CD8-positive, alpha-beta T cell (primary cell): ENCODE measurements at regions of chr9 and their contacts with region 1.

Region 1: DNA sequence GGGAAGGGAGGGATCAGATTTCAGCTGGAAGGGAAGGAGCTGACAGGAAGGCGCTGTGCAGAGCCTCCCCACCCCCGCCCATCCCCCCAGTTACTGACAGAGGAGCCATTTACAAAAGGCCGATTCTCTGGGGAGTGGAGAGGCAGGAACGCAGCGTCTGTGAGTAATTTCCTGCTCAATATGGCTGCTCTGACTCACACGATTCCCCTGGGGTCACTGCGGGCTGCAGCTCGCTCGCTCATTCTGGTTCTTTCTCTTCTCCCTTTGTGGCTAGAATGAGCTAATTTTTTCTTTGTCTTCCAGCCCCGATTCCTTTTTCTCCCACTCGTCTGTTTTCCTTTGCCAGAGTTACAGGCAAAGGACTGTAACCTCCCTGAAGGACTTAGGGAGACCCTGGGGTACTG is 28.8 kb downstream of the PTPA start:
- DNase-seq: peak; percentile 35 to 92 (median 80)
- ATAC-seq: peak; percentile 89
- H3K4me3 ChIP-seq: peak overlapping the region; percentile 55 to 58
- H3K4me3 Mint-ChIP-seq: peak overlapping the region; percentile 90
- H3K27ac ChIP-seq: peak overlapping the region; percentile 86 to 94
- H3K27ac Mint-ChIP-seq: peak overlapping the region; percentile 95
- H3K4me1 ChIP-seq: peaks cover 36% of the 10 kb centered on the region
- H3K4me1 Mint-ChIP-seq: peaks cover 34% of the 10 kb centered on the region
- H3K27me3 ChIP-seq: no peaks in the 10 kb centered on the region
- H3K27me3 Mint-ChIP-seq: no peaks in the 10 kb centered on the region
- CTCF ChIP-seq: no peak

Region 2: GRCh38 chr9:129154866-129155477 is 15.0 kb after region 1 on chr9:
- CTCF ChIA-PET with region 1: interaction called, 39 read pairs
- POLR2A ChIA-PET with region 1: no interaction called
- intact Hi-C with region 1: no loop called
- DNase-seq: no peak
- ATAC-seq: no peak
- H3K4me3 ChIP-seq: no peak overlapping the region
- H3K4me3 Mint-ChIP-seq: no peak overlapping the region
- H3K27ac ChIP-seq: no peak overlapping the region
- H3K27ac Mint-ChIP-seq: no peak overlapping the region
- H3K4me1 ChIP-seq: no peaks in the 10 kb centered on the region
- H3K4me1 Mint-ChIP-seq: no peaks in the 10 kb centered on the region
- H3K27me3 ChIP-seq: no peaks in the 10 kb centered on the region
- H3K27me3 Mint-ChIP-seq: no peaks in the 10 kb centered on the region
- CTCF ChIP-seq: no peak

Region 3: DNA sequence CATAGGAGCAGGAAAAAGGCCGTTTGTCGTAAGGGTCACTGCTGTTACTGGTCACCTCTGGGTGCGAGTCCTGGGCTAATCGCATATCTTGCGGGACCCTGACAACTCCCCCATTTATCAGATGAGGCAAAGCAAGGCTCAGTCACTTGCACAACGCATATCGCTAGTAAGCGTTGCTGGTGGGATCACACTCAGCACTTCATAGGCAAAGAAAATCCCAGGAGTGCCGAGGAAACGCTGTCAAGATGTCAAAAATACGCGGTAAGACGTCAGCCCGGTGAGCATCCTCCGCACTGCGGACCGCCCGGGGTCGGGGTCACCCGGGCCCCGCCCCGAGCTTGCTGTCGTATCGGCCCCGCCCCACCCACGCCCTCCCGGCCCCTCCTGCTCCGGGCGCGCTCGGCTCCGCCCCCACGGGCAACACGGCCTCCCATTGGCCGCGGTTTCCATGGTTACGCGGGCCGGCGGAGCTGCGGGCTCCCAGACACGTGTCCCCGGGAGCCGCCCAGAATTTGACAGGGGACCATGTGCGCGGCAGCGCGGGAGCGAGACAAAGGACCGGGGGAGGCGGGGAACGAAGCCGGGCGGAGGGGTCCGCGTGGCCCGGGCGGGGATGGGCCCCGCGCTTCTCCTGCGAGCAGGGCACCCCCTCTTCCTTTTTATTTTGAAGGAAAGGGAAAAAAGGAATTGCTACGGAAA is 118.3 kb after region 1 on chr9:
- CTCF ChIA-PET with region 1: no interaction called
- POLR2A ChIA-PET with region 1: no interaction called
- intact Hi-C with region 1: loop called in 1 of 2 experiments (anchors 2 kb)
- DNase-seq: peak; percentile 77 to 96 (median 89)
- ATAC-seq: peak; percentile 88
- H3K4me3 ChIP-seq: peak overlapping the region; percentile 38 to 42
- H3K4me3 Mint-ChIP-seq: peak overlapping the region; percentile 75
- H3K27ac ChIP-seq: no peak overlapping the region
- H3K27ac Mint-ChIP-seq: no peak overlapping the region
- H3K4me1 ChIP-seq: peaks cover 24% of the 10 kb centered on the region
- H3K4me1 Mint-ChIP-seq: peaks cover 23% of the 10 kb centered on the region
- H3K27me3 ChIP-seq: peaks cover 0 to 3% of the 10 kb centered on the region in 2 experiments
- H3K27me3 Mint-ChIP-seq: peaks cover 5% of the 10 kb centered on the region
- CTCF ChIP-seq: no peak

Region 4: DNA sequence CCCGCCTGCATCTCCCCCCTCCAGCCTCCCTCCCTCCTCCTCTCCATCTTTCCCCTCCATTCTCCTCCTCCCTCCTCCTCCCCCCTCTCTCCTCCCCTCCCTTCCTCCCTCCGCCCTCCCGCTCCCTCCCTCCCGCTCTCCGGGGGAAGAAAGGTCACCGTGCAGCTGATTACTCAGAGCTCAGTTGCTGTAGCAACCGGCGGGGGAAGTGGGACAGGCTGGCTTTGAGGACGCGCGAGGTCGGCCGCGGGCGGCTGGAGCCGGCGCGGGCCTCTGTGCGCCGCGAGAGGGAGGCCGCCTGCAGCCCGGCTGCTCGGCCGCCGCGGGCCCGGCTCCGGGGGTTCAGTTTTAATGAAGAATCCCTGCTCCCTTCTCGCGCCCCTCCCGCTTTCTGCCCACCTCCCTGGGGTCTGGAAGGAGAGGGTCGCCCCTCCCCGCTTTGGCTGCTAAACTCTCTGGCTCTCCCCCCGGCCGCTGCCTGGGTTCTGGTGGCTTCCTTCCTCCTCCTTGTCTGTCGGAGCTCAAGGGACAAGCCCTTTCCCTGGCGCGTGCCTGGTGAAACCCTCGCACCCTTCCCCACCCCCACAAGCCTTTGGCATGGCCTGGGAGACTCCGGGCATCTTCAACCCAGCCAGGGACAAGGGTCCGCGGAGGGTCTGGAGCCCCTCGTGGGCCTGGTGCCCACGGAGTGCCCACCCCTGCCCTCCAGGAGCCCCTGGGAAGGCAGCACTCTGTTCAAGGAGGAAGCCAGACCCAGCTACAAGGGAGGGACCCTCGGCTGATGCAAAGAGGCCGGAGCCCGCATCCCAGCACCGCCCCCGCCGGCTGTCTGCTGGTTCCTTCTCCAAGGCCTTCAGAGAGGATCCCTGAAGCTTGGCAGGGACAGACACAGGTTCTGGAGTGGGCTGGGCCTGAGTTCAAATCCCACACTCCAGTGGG is 320.6 kb after region 1 on chr9:
- CTCF ChIA-PET with region 1: interaction called, 3 read pairs
- POLR2A ChIA-PET with region 1: no interaction called
- intact Hi-C with region 1: loop called in 1 of 2 experiments (anchors 1 kb)
- DNase-seq: peak; percentile 75 to 95 (median 88)
- ATAC-seq: peak; percentile 68
- H3K4me3 ChIP-seq: peak overlapping the region; percentile 24 to 46
- H3K4me3 Mint-ChIP-seq: peak overlapping the region; percentile 78
- H3K27ac ChIP-seq: peak overlapping the region; percentile 56 to 85
- H3K27ac Mint-ChIP-seq: peak overlapping the region; percentile 90
- H3K4me1 ChIP-seq: peaks cover 38% of the 10 kb centered on the region
- H3K4me1 Mint-ChIP-seq: peaks cover 45% of the 10 kb centered on the region
- H3K27me3 ChIP-seq: no peaks in the 10 kb centered on the region
- H3K27me3 Mint-ChIP-seq: no peaks in the 10 kb centered on the region
- CTCF ChIP-seq: no peak

Region 5: GRCh38 chr9:129610473-129611301 is 470.7 kb after region 1 on chr9:
- CTCF ChIA-PET with region 1: interaction called, 53 read pairs
- POLR2A ChIA-PET with region 1: interaction called, 4 read pairs
- intact Hi-C with region 1: loop called (anchors 1 kb)
- DNase-seq: peak; percentile 50 to 85 (median 75)
- ATAC-seq: peak; percentile 57
- H3K4me3 ChIP-seq: peak overlapping the region; percentile 36 to 77
- H3K4me3 Mint-ChIP-seq: peak overlapping the region; percentile 76
- H3K27ac ChIP-seq: no peak overlapping the region
- H3K27ac Mint-ChIP-seq: peak overlapping the region; percentile 69
- H3K4me1 ChIP-seq: peaks cover 25% of the 10 kb centered on the region
- H3K4me1 Mint-ChIP-seq: peaks cover 29% of the 10 kb centered on the region
- H3K27me3 ChIP-seq: no peaks in the 10 kb centered on the region
- H3K27me3 Mint-ChIP-seq: no peaks in the 10 kb centered on the region
- CTCF ChIP-seq: peak; percentile 93

Region 6: DNA sequence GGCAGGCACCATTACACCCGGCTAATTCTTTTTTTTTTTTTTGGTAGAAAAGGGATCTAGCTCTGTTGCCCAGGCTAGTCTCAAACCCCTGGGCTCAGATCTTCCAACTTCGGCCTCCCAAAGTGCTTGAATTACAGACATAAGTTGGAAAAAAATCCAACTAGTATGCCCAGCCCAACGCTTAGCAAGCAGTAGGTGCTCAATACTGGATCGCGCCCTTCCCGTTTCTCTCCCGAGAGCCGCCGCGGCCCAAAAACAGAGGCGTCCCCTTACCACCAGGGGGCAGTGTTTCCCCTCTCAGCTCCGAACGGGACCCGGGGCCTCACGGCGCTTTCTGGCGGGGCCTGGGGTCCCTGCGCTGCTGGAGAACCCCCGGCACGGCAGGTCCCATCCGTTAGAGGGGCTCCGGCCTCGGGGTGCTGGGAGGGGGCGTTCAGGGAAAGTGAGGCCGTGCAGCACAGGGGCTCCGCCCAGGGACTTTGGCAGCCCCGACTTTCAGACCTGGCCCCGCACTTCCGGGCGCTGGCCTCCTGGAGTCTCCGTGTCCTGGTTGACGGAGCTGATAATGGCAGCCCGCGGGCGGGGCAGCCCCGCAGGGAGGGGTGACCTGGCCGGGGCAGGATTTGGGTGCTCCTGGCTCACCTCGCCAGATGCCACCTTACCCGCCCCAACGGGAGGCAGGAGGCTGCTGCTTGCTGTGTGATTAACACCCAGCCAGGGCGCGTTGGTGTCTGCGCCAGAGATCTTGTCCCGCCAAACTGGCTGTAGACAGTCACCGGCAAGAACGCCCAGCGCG is 597.7 kb after region 1 on chr9:
- CTCF ChIA-PET with region 1: interaction called, 11 read pairs
- POLR2A ChIA-PET with region 1: no interaction called
- intact Hi-C with region 1: loop called in 1 of 2 experiments (anchors 5 kb)
- DNase-seq: peak; percentile 72 to 95 (median 87)
- ATAC-seq: peak; percentile 85
- H3K4me3 ChIP-seq: peak overlapping the region; percentile 72 to 92
- H3K4me3 Mint-ChIP-seq: peak overlapping the region; percentile 76
- H3K27ac ChIP-seq: peak overlapping the region; percentile 50 to 77
- H3K27ac Mint-ChIP-seq: peak overlapping the region; percentile 60
- H3K4me1 ChIP-seq: peaks cover 9% of the 10 kb centered on the region
- H3K4me1 Mint-ChIP-seq: peaks cover 6% of the 10 kb centered on the region
- H3K27me3 ChIP-seq: no peaks in the 10 kb centered on the region
- H3K27me3 Mint-ChIP-seq: peaks cover 2% of the 10 kb centered on the region
- CTCF ChIP-seq: peak; percentile 96

Region 7: GRCh38 chr9:130235897-130236668 is 1096.1 kb after region 1 on chr9:
- CTCF ChIA-PET with region 1: no interaction called
- POLR2A ChIA-PET with region 1: no interaction called
- intact Hi-C with region 1: loop called in 1 of 2 experiments (anchors 10 kb)
- DNase-seq: peak; percentile 53 to 85 (median 70)
- ATAC-seq: peak; percentile 66
- H3K4me3 ChIP-seq: no peak overlapping the region
- H3K4me3 Mint-ChIP-seq: peak overlapping the region; percentile 42
- H3K27ac ChIP-seq: no peak overlapping the region
- H3K27ac Mint-ChIP-seq: no peak overlapping the region
- H3K4me1 ChIP-seq: peaks cover 5% of the 10 kb centered on the region
- H3K4me1 Mint-ChIP-seq: peaks cover 8% of the 10 kb centered on the region
- H3K27me3 ChIP-seq: no peaks in the 10 kb centered on the region
- H3K27me3 Mint-ChIP-seq: no peaks in the 10 kb centered on the region
- CTCF ChIP-seq: peak; percentile 98